ENCODE measurements at regions of chr12 and their contacts with region 1.

Region 1: GRCh38 chr12:115998119-115998633 is 279.3 kb downstream of the MED13L start:
- DNase-seq: no peak
- ATAC-seq: peak in 5 of 8 donors; percentile 26 to 56 (median 46)
- H3K4me3 ChIP-seq: no peak overlapping the region
- H3K27ac ChIP-seq: no peak overlapping the region
- H3K4me1 ChIP-seq: peaks cover 0 to 9% (median 4%) of the 10 kb centered on the region in 9 donors
- H3K27me3 ChIP-seq: no peaks in the 10 kb centered on the region
- CTCF ChIP-seq: peak; percentile 79 to 91 (median 87)

Region 2: DNA sequence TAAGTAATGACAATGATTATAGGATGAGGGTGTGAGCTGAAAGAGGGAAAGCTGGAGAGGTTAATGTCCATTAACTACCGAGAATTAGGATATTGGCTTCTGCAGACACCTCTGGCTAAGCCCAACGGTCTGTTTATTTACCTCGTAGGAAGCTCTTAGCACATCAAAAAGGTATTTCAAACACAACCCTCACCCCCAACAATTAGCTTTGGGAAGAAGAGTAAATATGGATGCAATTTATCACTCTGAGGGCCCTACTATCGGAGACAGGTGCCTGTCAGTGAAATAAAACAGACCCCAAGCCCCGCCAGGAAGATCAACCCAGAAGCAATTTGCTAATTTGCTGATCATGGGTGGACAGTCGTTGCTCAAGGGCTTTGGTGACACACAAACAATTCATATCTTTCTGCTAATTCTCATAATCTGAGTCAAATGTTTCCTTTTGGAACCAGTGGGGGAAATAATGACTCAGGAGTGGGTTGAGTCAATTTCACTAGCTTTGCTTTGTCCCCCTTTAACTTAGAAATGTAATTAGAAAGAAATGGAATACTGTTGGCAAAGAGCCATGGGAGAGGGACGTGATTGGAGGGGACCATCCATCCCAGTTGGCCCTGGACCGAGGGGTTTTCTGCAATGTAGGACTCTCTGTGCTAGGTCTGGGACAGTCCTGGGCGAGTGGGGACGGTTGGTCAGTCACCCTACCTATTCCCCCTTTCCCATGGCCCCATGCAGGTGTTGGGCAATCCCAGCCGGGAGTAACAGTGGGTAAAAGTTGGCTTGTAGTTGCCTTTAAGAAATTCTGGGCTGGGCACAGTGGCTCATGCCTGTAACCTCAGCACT is 378.4 kb after region 1 on chr12:
- intact Hi-C with region 1: loop called in 1 of 10 experiments (anchors 10 kb)
- DNase-seq: no peak
- ATAC-seq: no peak
- H3K4me3 ChIP-seq: no peak overlapping the region
- H3K27ac ChIP-seq: no peak overlapping the region
- H3K4me1 ChIP-seq: peaks cover 0 to 28% (median 0%) of the 10 kb centered on the region in 9 donors
- H3K27me3 ChIP-seq: peaks cover 0 to 31% (median 10%) of the 10 kb centered on the region in 7 donors
- CTCF ChIP-seq: no peak

Region 3: DNA sequence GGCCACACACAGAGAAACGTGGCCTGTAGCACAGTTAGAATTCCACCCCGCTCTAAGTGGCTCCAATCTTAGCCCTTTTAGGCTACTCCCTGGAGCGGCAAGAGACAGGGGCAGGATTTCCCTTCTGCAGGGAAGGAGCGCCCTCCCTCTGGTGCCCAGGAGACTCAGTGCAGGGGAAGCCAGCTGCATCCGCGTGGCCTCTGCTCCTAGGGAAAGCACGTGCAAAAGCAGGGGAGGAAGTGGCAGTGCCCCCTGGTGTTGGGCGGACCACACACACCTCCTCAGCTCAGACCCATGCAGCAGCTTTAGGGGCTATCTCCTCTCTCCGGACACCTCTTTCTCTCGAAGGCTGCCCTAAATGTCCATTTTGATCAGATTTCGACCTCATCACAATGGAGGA is 689.7 kb after region 1 on chr12:
- intact Hi-C with region 1: loop called in 1 of 10 experiments (anchors 10 kb)
- DNase-seq: peak; percentile 29 to 65
- ATAC-seq: peak; percentile 63 to 86 (median 78)
- H3K4me3 ChIP-seq: no peak overlapping the region
- H3K27ac ChIP-seq: no peak overlapping the region
- H3K4me1 ChIP-seq: peaks cover 0 to 11% (median 2%) of the 10 kb centered on the region in 9 donors
- H3K27me3 ChIP-seq: peaks cover 0 to 27% (median 19%) of the 10 kb centered on the region in 7 donors
- CTCF ChIP-seq: peak; percentile 12 to 70 (median 53)

Region 4: GRCh38 chr12:116708826-116709756 is 710.9 kb after region 1 on chr12:
- intact Hi-C with region 1: loop called in 7 of 10 experiments (anchors 5 to 10 kb)
- DNase-seq: peak in 1 of 2 donors; percentile 33
- ATAC-seq: peak; percentile 55 to 85 (median 80)
- H3K4me3 ChIP-seq: peak overlapping the region in 3 of 10 donors; percentile 6 to 27 (median 6)
- H3K27ac ChIP-seq: no peak overlapping the region
- H3K4me1 ChIP-seq: peaks cover 3 to 22% (median 10%) of the 10 kb centered on the region in 9 donors
- H3K27me3 ChIP-seq: peaks cover 0 to 9% (median 0%) of the 10 kb centered on the region in 7 donors
- CTCF ChIP-seq: peak; percentile 34 to 79 (median 68)